Colonic mucosa (tissue), 4 donors: ENCODE measurements at regions of chr3 and their contacts with region 1.

Region 1: GRCh38 chr3:16550676-16551341 is 37.3 kb upstream of the RFTN1 start:
- DNase-seq: peak; percentile 81
- H3K4me3 ChIP-seq: no peak overlapping the region
- H3K27ac ChIP-seq: no peak overlapping the region
- H3K4me1 ChIP-seq: no peaks in the 10 kb centered on the region
- H3K27me3 ChIP-seq: no peaks in the 10 kb centered on the region
- CTCF ChIP-seq: peak; percentile 91

Region 2: DNA sequence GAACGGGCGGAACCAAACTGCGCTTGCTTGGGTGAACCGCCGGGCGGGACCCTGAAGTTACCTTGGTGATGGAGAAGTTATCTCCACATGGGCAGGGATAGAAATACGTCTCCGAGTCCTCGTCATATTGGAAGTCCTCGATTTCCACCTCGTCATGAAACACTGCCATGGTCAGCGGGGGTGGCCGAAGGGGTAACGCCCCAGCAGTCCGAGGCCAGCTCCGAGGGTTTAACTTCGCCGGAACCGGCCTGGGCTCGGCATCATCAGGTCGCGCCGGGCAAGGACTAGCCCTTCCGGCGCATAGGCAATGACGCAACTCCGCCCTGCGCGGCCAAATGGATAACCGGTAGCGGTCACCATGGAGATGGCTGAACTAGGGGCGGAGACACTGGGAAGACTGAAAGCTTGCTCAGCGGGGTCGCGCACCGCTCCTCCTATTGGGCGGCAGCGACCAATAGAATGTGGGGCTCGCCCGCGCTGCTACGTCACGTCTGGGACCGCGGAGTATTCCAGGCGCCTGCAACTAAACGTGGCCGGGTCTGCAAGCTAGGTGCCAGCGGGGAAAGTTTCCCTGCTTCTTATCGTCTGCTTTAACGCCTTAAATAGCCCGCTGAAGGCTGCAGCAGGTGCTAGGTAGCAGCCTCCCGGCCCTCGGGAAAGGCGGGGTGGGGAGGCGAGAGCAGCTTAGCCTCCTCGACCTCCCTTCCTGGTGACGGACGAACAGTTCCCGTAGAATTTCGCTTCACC is 285.9 kb before region 1 on chr3 and contains the starts of genes DPH3 and OXNAD1:
- intact Hi-C with region 1: loop called (anchors 5 kb)
- DNase-seq: peak; percentile 100
- H3K4me3 ChIP-seq: peak within 1 kb of the TSS; percentile 85
- H3K27ac ChIP-seq: peak within 1 kb of the TSS; percentile 92
- H3K4me1 ChIP-seq: peaks cover 5% of the 10 kb centered on the region
- H3K27me3 ChIP-seq: no peaks in the 10 kb centered on the region
- CTCF ChIP-seq: no peak
- total RNA-seq, gene DPH3: 15.4 to 23.4 TPM
- total RNA-seq, gene OXNAD1: 23.4 to 26.2 TPM

Region 3: DNA sequence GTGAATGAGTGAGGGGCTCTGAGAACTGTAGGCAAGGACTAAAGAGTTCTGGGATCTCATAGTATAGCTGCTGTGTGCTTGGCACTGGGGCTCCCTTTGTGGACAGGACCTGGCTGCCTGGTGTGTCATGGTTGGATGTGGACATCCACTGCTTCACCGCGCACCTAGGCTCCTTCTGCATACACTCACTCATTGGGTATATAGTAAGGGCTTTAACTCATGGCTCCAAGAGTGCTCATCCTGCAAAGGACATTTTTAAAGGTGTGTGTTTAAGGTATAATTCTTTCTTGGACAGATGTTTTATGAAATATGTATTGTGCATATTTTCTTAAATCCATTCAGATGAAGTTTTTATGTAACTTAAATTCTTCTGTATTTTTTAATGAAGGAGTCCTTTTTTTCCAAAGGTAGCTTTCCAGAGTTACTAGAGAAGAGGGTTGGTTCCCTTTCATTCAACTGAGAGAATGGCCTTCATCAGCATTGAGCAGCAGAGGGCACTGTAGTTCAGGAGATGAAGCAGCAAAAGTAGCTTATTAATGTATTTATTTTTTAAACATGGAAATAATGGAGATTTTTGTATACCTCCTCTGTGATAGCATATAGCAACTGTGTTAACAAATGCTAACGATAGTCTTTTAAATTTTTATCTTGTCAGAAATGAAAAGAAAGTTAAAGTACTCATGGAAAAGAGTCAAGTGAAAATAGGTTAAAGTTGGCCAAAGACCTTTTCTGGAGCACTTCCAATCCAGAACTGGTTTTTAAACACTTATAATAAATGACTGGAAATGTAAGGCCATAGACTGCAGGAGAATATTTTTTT is 260.6 kb before region 1 on chr3:
- intact Hi-C with region 1: loop called (anchors 1 kb)
- DNase-seq: peak; percentile 65
- H3K4me3 ChIP-seq: no peak overlapping the region
- H3K27ac ChIP-seq: no peak overlapping the region
- H3K4me1 ChIP-seq: no peaks in the 10 kb centered on the region
- H3K27me3 ChIP-seq: no peaks in the 10 kb centered on the region
- CTCF ChIP-seq: peak; percentile 50

Region 4: GRCh38 chr3:16329036-16329825 is 221.6 kb before region 1 on chr3:
- intact Hi-C with region 1: no loop called
- DNase-seq: no peak
- H3K4me3 ChIP-seq: no peak overlapping the region
- H3K27ac ChIP-seq: no peak overlapping the region
- H3K4me1 ChIP-seq: no peaks in the 10 kb centered on the region
- H3K27me3 ChIP-seq: no peaks in the 10 kb centered on the region
- CTCF ChIP-seq: no peak